Dorsolateral prefrontal cortex (tissue), 120 donors: ENCODE measurements at regions of chr2 and their contacts with region 1.

Region 1: GRCh38 chr2:74250189-74250631 is 51.8 kb downstream of the MTHFD2 start:
- DNase-seq: peak in 6 of 10 donors; percentile 12 to 54 (median 30)
- H3K4me3 ChIP-seq: no peak overlapping the region
- H3K27ac ChIP-seq: no peak overlapping the region
- H3K27me3 ChIP-seq: no peaks in the 10 kb centered on the region
- CTCF ChIP-seq: peak; percentile 54 to 87 (median 76)

Region 2: GRCh38 chr2:74334931-74335333 is 84.7 kb after region 1 on chr2:
- intact Hi-C with region 1: loop called (anchors 5 kb)
- DNase-seq: peak; percentile 66 to 88 (median 74)
- H3K4me3 ChIP-seq: no peak overlapping the region
- H3K27ac ChIP-seq: peak overlapping the region in 1 of 59 donors; percentile 79
- H3K27me3 ChIP-seq: no peaks in the 10 kb centered on the region
- CTCF ChIP-seq: peak; percentile 66 to 97 (median 92)

Region 3: DNA sequence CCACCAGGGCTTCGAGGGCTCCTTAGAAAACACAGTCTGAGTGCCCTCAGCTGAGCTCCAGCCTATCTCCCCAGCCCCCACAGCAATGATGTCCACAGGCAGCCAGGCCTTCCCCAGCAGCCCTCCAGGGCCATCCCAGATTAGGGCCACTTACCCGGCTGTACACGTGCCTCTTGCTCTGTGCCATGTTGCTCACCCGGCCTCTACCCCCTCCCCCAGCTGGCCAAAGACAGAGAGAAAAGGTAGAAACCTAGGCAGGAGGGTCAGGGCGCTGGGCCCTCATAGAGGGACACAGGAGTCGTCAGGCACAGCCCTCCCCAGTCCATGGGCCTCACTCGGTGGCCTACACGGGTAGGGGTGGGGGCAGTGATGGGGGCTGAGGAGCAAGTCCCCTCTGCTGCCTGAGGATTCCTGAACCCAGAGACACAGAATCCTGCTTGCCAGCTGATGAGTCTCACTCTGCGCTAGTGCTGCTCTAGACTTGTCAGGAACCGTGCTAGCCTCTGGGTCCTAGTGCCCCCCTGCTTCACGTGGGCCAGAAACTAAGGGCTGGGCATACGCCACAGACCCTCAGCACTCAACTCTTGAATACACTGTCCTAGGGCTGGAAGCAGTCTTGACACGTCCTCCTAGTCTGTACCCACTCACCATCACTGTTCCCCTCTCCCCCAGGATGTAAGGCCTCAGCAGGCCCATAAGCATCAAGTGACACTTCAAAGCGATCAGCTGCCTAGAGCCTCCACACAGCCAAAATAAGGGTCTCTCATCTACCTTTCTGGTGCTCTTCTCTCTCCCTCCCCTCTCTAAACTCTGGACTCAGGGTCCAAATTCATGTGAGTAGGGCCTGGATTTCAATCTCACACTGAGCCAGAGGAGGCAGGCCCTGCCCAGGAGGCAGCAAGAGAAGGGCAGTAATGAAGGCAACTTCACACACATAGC is 129.9 kb after region 1 on chr2 and contains the start of gene DCTN1:
- intact Hi-C with region 1: loop called in 1 of 2 experiments (anchors 10 kb)
- DNase-seq: peak; percentile 74 to 96 (median 90)
- H3K4me3 ChIP-seq: peak within 1 kb of the TSS; percentile 42 to 87 (median 71)
- H3K27ac ChIP-seq: peak within 1 kb of the TSS in 58 of 59 donors; percentile 9 to 94 (median 80)
- H3K27me3 ChIP-seq: no peaks in the 10 kb centered on the region
- CTCF ChIP-seq: no peak
- total RNA-seq, gene DCTN1: 269 to 525 (median 395) TPM

Region 4: DNA sequence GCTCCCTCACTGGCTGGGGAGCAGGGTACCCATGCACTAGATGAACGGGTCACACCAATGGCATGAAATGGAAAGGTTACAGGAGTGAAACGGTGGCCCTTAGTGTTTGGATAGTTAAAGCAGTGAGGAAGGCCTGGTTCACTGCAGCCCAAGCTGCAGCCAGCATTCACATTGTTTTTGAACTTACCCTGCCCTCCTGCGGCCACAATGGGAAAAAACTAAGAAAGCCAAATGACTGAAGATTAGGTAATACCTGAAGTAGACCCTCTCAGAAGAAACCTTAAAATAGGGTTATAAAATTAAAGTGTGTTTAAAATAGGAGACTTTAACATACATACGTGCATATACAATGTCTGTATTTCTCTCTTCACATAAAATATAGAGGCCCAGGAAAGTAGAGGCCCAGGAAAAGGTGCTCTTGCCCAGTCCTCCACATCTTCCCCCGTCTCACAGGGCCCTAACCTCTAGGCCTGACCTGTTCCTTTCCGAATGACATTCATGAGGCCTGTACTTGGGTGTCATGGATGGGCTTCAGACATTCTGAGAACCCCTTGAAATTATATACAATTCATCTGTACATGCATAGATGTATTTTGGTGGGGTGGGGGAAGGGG is 337.6 kb after region 1 on chr2:
- intact Hi-C with region 1: loop called in 1 of 2 experiments (anchors 5 kb)
- DNase-seq: peak in 7 of 10 donors; percentile 27 to 62 (median 48)
- H3K4me3 ChIP-seq: no peak overlapping the region
- H3K27ac ChIP-seq: no peak overlapping the region
- H3K27me3 ChIP-seq: peaks cover 0 to 18% (median under 1%) of the 10 kb centered on the region in 45 donors
- CTCF ChIP-seq: peak in 55 of 56 donors; percentile 7 to 84 (median 68)